Motor neuron (in vitro differentiated cells): ENCODE measurements at regions of chr12 and their contacts with region 1.

Region 1: GRCh38 chr12:124767066-124767821 is 96.4 kb downstream of the SCARB1 start:
- ATAC-seq: peak; percentile 48 to 94 (median 92)
- H3K4me3 ChIP-seq: no peak overlapping the region
- H3K27ac ChIP-seq: no peak overlapping the region
- H3K4me1 ChIP-seq: peaks cover 15 to 21% of the 10 kb centered on the region in 2 donors

Region 2: DNA sequence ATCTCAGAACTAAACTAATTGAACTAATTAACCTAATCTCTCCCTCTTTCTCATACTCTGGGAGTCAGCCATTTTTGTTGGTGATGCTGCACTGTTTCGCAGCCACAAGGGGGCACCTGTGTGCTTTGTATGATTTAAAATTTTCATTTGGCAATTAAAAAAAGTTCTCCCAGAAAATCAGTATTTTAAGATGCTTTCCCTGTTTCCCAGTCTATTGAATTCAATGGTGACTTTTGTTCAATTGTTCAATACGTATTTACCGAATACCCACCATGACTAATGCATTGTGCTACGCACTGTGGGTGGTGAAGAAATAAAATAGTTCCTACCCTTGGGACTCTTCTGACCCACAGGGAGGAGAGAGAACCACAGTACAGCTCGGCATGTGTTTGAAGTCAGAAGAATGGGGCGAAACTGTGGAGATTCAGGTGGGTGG is 730.6 kb before region 1 on chr12:
- in situ Hi-C with region 1: loop called in 8 of 9 experiments (anchors 5 to 25 kb)
- ATAC-seq: peak; percentile 28 to 77 (median 72)
- H3K4me3 ChIP-seq: peak overlapping the region in 1 of 5 donors; percentile 8
- H3K27ac ChIP-seq: peak overlapping the region in 1 of 2 donors; percentile 35
- H3K4me1 ChIP-seq: peaks cover 12 to 16% of the 10 kb centered on the region in 2 donors

Region 3: DNA sequence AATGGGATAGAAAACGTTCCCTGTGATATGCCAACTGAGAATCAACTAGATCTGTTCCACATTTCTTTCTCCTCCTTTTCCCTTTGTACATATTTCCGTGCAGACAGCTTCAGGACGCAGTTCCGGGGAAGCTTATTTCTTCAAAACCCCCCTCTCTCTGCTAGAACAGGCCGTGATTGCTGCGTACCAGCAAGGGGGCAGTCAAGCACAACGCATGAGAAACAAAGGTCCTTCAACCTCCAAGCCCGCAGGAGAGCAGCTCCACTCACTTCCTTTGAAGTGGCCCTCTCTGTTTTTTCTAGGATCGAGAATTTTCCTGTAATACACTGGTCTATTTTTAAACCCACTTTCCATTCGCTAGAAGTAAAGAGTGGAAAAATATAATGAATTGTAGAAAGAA is 713.4 kb before region 1 on chr12:
- in situ Hi-C with region 1: loop called in 8 of 9 experiments (anchors 10 to 25 kb)
- ATAC-seq: peak; percentile 78 to 99 (median 85)
- H3K4me3 ChIP-seq: no peak overlapping the region
- H3K27ac ChIP-seq: no peak overlapping the region
- H3K4me1 ChIP-seq: peaks cover 17% of the 10 kb centered on the region in 2 donors

Region 4: GRCh38 chr12:124388679-124389536 is 378.3 kb before region 1 on chr12:
- in situ Hi-C with region 1: loop called in 4 of 9 experiments (anchors 25 kb)
- ATAC-seq: peak; percentile 29 to 76 (median 70)
- H3K4me3 ChIP-seq: peak overlapping the region in 4 of 5 donors; percentile 10 to 25 (median 20)
- H3K27ac ChIP-seq: peak overlapping the region; percentile 70 to 79
- H3K4me1 ChIP-seq: peaks cover 53 to 68% of the 10 kb centered on the region in 2 donors

Region 5: GRCh38 chr12:124588751-124589267 is 178.4 kb before region 1 on chr12:
- in situ Hi-C with region 1: loop called in 1 of 9 experiments (anchors 25 kb)
- ATAC-seq: peak in 7 of 8 experiments; percentile 76 to 98 (median 94)
- H3K4me3 ChIP-seq: no peak overlapping the region
- H3K27ac ChIP-seq: peak overlapping the region in 1 of 2 donors; percentile 8
- H3K4me1 ChIP-seq: peaks cover 9 to 10% of the 10 kb centered on the region in 2 donors